ENCODE measurements at regions of chr7 and their contacts with region 1.

Region 1: DNA sequence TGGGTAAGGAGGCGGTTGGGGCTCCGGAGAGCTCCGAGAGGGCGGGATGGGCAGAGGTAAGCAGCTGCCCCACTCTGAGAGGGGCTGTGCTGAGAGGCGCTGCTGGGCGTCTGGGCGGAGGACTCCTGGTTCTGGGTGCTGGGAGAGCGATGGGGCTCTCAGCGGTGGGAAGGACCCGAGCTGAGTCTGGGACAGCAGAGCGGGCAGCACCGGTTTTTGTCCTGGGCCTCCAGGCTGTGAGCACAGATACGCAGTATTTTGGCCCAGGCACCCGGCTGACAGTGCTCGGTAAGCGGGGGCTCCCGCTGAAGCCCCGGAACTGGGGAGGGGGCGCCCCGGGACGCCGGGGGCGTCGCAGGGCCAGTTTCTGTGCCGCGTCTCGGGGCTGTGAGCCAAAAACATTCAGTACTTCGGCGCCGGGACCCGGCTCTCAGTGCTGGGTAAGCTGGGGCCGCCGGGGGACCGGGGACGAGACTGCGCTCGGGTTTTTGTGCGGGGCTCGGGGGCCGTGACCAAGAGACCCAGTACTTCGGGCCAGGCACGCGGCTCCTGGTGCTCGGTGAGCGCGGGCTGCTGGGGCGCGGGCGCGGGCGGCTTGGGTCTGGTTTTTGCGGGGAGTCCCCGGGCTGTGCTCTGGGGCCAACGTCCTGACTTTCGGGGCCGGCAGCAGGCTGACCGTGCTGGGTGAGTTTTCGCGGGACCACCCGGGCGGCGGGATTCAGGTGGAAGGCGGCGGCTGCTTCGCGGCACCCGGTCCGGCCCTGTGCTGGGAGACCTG is 26.0 kb downstream of the PRSS2 start:
- DNase-seq: peak in 3 of 9 donors; percentile 25 to 45 (median 40)
- ATAC-seq: peak; percentile 2
- H3K4me3 ChIP-seq: peak overlapping the region; percentile 83
- H3K4me3 Mint-ChIP-seq: peak overlapping the region; percentile 95 to 100 (median 99)
- H3K27ac ChIP-seq: peak overlapping the region; percentile 98
- H3K27ac Mint-ChIP-seq: peak overlapping the region; percentile 99 to 100 (median 100)
- H3K4me1 ChIP-seq: peaks cover 43 to 45% of the 10 kb centered on the region in 2 donors
- H3K4me1 Mint-ChIP-seq: peaks cover 29 to 70% (median 67%) of the 10 kb centered on the region in 7 donors
- H3K27me3 ChIP-seq: no peaks in the 10 kb centered on the region
- H3K27me3 Mint-ChIP-seq: peaks cover 0 to 2% (median 0%) of the 10 kb centered on the region in 5 donors

Region 2: DNA sequence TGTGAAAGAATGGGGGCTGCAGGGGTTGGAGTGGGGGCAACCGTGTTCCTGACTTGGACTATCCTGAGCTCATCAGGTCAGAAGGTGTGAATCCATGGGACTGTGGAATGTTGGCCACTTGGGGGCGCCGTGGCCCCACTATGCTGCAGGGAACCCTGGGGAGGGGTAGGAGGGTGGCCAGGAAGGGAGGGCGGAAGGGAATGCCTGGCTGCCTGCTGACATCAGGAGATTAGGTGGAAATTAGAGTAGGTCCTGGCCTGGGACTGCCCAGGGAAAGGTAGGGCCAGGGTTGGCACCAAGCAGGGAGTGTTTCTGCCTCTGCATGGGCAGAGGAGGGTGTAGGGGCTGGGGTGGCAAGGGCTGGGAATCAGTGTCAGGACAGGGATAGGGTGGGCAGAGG is 473.1 kb before region 1 on chr7:
- CTCF ChIA-PET with region 1: no interaction called
- POLR2A ChIA-PET with region 1: interaction called, 70 read pairs
- intact Hi-C with region 1: loop called in 1 of 2 experiments (anchors 1 kb)
- DNase-seq: peak in 5 of 9 donors; percentile 25 to 44 (median 41)
- ATAC-seq: peak; percentile 40
- H3K4me3 ChIP-seq: no peak overlapping the region
- H3K4me3 Mint-ChIP-seq: peak overlapping the region in 7 of 10 donors; percentile 4 to 65 (median 54)
- H3K27ac ChIP-seq: peak overlapping the region; percentile 34
- H3K27ac Mint-ChIP-seq: peak overlapping the region; percentile 17 to 96 (median 80)
- H3K4me1 ChIP-seq: peaks cover 0 to 24% of the 10 kb centered on the region in 2 donors
- H3K4me1 Mint-ChIP-seq: peaks cover 5 to 51% (median 34%) of the 10 kb centered on the region in 7 donors
- H3K27me3 ChIP-seq: no peaks in the 10 kb centered on the region
- H3K27me3 Mint-ChIP-seq: peaks cover 0 to 23% (median 4%) of the 10 kb centered on the region in 5 donors

Region 3: GRCh38 chr7:142391191-142391992 is 405.4 kb before region 1 on chr7:
- CTCF ChIA-PET with region 1: no interaction called
- POLR2A ChIA-PET with region 1: interaction called, 12 read pairs
- intact Hi-C with region 1: loop called in 1 of 2 experiments (anchors 5 kb)
- DNase-seq: peak in 5 of 9 donors; percentile 22 to 37 (median 35)
- ATAC-seq: peak; percentile 63
- H3K4me3 ChIP-seq: no peak overlapping the region
- H3K4me3 Mint-ChIP-seq: peak overlapping the region; percentile 21 to 85 (median 54)
- H3K27ac ChIP-seq: peak overlapping the region; percentile 35
- H3K27ac Mint-ChIP-seq: peak overlapping the region in 8 of 9 donors; percentile 12 to 86 (median 58)
- H3K4me1 ChIP-seq: no peaks in the 10 kb centered on the region
- H3K4me1 Mint-ChIP-seq: peaks cover 0 to 6% (median 4%) of the 10 kb centered on the region in 7 donors
- H3K27me3 ChIP-seq: no peaks in the 10 kb centered on the region
- H3K27me3 Mint-ChIP-seq: peaks cover 0 to 6% (median 0%) of the 10 kb centered on the region in 5 donors

Region 4: GRCh38 chr7:142516038-142516501 is 280.7 kb before region 1 on chr7:
- CTCF ChIA-PET with region 1: no interaction called
- POLR2A ChIA-PET with region 1: interaction called, 18 read pairs
- intact Hi-C with region 1: no loop called
- DNase-seq: peak in 5 of 9 donors; percentile 42 to 55 (median 47)
- ATAC-seq: peak; percentile 85
- H3K4me3 ChIP-seq: no peak overlapping the region
- H3K4me3 Mint-ChIP-seq: peak overlapping the region in 7 of 10 donors; percentile 4 to 81 (median 46)
- H3K27ac ChIP-seq: no peak overlapping the region
- H3K27ac Mint-ChIP-seq: peak overlapping the region in 8 of 9 donors; percentile 32 to 92 (median 74)
- H3K4me1 ChIP-seq: peaks cover 0 to 35% of the 10 kb centered on the region in 2 donors
- H3K4me1 Mint-ChIP-seq: peaks cover 19 to 67% (median 56%) of the 10 kb centered on the region in 7 donors
- H3K27me3 ChIP-seq: no peaks in the 10 kb centered on the region
- H3K27me3 Mint-ChIP-seq: peaks cover 0 to 10% (median 0%) of the 10 kb centered on the region in 5 donors

Region 5: DNA sequence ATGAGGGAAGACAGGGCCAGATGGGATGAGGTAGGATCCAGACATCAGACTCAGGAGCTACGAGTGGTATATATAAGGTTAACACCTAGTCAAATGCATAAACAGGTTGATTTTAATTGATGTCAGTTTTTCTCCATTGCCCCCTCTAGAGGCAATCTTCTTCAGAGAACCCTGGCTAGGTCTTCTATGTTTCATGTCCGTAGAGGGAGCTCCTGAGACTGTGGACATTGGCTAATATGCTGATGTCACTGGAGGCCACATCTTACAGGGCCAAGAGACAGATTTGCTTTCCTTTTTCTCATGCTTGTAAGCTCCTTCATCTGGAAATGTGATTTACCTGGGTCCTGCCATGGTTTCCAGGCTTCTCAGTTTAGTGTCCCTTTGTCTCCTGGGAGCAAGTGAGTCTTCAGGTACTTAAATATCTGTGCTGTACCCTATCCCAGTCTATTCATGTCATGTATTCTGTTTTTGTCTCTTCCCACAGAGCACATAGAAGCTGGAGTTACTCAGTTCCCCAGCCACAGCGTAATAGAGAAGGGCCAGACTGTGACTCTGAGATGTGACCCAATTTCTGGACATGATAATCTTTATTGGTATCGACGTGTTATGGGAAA is 209.1 kb before region 1 on chr7:
- CTCF ChIA-PET with region 1: no interaction called
- POLR2A ChIA-PET with region 1: interaction called, 16 read pairs
- intact Hi-C with region 1: no loop called
- DNase-seq: peak in 7 of 9 donors; percentile 18 to 53 (median 34)
- ATAC-seq: peak; percentile 91
- H3K4me3 ChIP-seq: no peak overlapping the region
- H3K4me3 Mint-ChIP-seq: peak overlapping the region in 4 of 10 donors; percentile 5 to 56 (median 24)
- H3K27ac ChIP-seq: no peak overlapping the region
- H3K27ac Mint-ChIP-seq: peak overlapping the region in 4 of 9 donors; percentile 12 to 66 (median 42)
- H3K4me1 ChIP-seq: no peaks in the 10 kb centered on the region
- H3K4me1 Mint-ChIP-seq: peaks cover 0 to 16% (median 5%) of the 10 kb centered on the region in 7 donors
- H3K27me3 ChIP-seq: no peaks in the 10 kb centered on the region
- H3K27me3 Mint-ChIP-seq: no peaks in the 10 kb centered on the region

Region 6: DNA sequence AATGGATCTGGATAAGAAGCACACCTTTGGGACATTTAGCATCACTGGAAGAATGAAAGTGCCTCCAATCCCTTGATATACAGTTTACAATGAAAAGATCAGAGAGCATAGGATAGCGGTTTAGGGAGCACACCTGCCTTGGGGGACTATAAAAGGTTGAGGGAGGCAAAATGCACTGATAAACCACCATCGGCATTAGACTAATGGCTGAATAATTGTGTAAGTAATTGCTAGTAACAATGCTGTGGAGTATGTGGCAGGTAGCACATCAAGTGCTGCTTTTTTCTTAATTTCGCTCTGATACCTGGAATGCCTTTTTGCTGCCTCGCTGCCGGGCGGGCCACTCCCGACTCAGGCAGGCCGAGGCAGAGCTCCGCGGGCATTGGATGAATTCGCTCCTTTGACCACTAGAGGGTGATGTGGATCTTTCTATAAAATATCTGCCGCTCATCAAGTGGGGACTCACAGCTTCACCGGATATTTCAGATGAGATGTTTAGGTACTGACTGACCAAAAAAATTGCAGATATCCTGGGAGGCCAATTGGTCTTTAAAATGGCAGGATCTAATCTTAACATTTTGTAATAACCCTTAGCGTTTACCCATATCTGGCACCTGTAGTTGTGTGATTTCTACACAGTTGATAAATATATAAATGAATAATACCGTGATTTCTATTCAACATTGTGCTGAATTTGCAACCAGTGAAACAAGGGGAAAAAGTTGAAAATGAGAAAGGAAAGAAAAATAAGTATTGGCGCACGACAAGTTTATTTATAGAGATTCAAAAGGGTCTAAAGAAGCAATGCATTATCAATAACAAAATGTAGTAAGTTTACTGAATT is 164.3 kb before region 1 on chr7:
- CTCF ChIA-PET with region 1: interaction called, 4 read pairs
- POLR2A ChIA-PET with region 1: interaction called, 70 read pairs
- intact Hi-C with region 1: no loop called
- DNase-seq: peak; percentile 26 to 76 (median 63)
- ATAC-seq: peak; percentile 80
- H3K4me3 ChIP-seq: no peak overlapping the region
- H3K4me3 Mint-ChIP-seq: peak overlapping the region in 5 of 10 donors; percentile 6 to 63 (median 38)
- H3K27ac ChIP-seq: no peak overlapping the region
- H3K27ac Mint-ChIP-seq: peak overlapping the region in 7 of 9 donors; percentile 13 to 84 (median 46)
- H3K4me1 ChIP-seq: no peaks in the 10 kb centered on the region
- H3K4me1 Mint-ChIP-seq: peaks cover 4 to 17% (median 11%) of the 10 kb centered on the region in 7 donors
- H3K27me3 ChIP-seq: no peaks in the 10 kb centered on the region
- H3K27me3 Mint-ChIP-seq: peaks cover 0 to 15% (median 0%) of the 10 kb centered on the region in 5 donors

Region 7: GRCh38 chr7:142853739-142854371 is 57.1 kb after region 1 on chr7:
- CTCF ChIA-PET with region 1: interaction called, 5 read pairs
- POLR2A ChIA-PET with region 1: interaction called, 35 read pairs
- intact Hi-C with region 1: no loop called
- DNase-seq: peak; percentile 56 to 74 (median 68)
- ATAC-seq: peak; percentile 88
- H3K4me3 ChIP-seq: peak overlapping the region; percentile 85
- H3K4me3 Mint-ChIP-seq: peak overlapping the region; percentile 90 to 99 (median 97)
- H3K27ac ChIP-seq: peak overlapping the region; percentile 69
- H3K27ac Mint-ChIP-seq: peak overlapping the region; percentile 37 to 92 (median 89)
- H3K4me1 ChIP-seq: peaks cover 4 to 12% of the 10 kb centered on the region in 2 donors
- H3K4me1 Mint-ChIP-seq: peaks cover 17 to 61% (median 39%) of the 10 kb centered on the region in 7 donors
- H3K27me3 ChIP-seq: no peaks in the 10 kb centered on the region
- H3K27me3 Mint-ChIP-seq: peaks cover 0 to 30% (median 0%) of the 10 kb centered on the region in 5 donors

Measured in naive thymus-derived CD4-positive, alpha-beta T cell (primary cell).